Kidney (tissue), 22 donors: ENCODE measurements at regions of chr3 and their contacts with region 1.

Region 1: DNA sequence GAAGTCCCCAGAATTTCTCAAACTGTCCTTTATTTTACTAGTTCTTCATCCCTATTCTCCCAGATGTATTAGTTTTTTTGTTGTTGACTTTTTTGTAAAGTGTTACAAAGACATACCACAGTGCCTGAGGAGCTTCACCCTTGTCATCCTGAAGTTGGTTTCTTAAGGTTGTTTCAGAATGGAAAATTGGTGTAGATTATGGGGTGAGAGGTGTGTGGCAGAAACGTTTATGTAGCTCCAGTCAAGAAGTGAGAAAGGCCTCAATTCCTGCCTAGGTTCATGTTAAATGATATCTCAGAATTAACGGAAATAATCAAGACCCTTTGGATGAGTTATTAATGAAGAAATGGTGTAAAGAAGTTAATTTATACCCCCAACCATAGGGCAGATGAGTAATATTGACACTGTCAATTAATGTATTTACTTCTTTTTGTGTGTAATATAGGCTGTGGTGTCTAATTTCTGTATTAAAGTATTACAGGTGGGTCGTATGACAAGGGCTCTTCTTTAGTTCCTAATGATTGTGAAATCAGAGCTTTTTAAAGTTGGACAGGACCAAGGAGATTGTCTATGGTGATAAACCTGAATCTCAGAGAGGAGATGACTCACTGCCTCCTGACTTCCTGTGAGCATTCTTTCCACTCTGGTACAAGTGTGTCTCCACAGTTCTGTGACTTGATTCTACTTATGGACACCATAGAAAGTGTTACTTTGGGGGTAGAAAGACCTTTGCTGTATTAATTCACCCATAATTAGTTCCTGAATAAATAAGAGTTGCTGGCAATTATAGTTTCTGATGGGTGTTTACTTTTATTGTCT is 7.0 kb downstream of the EDEM1 start:
- DNase-seq: no peak
- H3K4me3 ChIP-seq: no peak overlapping the region
- H3K27ac ChIP-seq: no peak overlapping the region
- H3K4me1 ChIP-seq: peaks cover 0 to 7% (median 4%) of the 10 kb centered on the region in 3 donors
- H3K27me3 ChIP-seq: no peaks in the 10 kb centered on the region
- CTCF ChIP-seq: no peak

Region 2: DNA sequence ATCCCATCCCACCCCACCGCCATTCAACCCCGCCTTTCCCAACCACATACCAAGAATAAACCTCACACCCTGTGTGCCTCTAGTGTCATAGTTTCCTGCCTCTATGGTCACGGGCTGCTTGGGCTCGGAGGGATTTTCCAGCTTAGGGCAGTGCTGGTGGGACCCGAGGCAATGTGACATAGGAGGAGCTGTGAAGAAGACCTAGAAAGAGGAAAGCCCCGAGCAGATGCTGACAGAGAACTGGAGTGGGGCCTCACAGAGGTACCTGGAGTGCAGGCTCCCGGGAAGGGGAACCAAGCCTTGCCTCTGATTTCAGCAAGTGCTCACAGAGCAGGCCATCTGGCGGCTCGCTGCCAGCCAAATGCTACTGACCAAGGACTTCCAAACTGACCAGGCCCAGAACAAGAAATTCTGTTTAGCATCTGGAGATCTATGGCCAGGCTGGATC is 187.8 kb before region 1 on chr3:
- intact Hi-C with region 1: no loop called
- DNase-seq: no peak
- H3K4me3 ChIP-seq: no peak overlapping the region
- H3K27ac ChIP-seq: no peak overlapping the region
- H3K4me1 ChIP-seq: peaks cover 0 to 3% (median 0%) of the 10 kb centered on the region in 3 donors
- H3K27me3 ChIP-seq: no peaks in the 10 kb centered on the region
- CTCF ChIP-seq: no peak

Region 3: DNA sequence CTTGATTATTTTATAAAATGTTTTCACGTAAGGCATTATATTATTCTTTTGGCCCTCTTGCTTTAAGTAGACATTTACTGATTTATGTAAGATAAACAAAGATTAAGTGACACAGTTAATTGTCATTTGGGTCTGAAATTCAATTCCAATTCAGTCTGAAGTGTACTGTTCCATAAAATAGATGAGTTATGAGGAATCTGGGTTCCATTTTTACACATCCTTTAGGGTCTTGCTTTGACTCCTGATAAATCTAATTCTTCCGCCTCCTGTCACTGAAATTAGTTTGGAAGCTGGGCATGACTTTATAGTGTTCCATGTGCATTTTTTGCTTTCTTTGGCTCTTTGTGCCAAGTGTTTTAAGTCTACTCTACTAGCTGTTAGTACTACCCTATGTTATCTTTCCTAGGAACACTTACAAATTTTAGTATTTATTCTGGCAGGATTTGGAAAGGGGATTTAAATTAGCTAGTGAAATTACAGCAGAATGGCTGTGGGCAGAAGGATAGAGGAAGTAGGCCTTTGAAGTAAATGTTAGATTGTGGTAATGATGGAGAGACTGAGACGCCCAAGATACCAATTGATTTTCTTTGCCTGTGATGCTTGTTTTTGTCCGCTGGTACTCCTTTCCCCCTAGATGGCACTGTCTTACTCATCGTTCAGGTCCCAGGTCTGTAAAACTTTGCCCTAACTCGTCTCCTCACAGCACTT is 58.2 kb before region 1 on chr3:
- intact Hi-C with region 1: loop called (anchors 10 kb)
- DNase-seq: peak in 2 of 5 donors; percentile 19 to 35
- H3K4me3 ChIP-seq: no peak overlapping the region
- H3K27ac ChIP-seq: no peak overlapping the region
- H3K4me1 ChIP-seq: peaks cover 0 to 43% (median 22%) of the 10 kb centered on the region in 3 donors
- H3K27me3 ChIP-seq: no peaks in the 10 kb centered on the region
- CTCF ChIP-seq: no peak